ENCODE measurements at regions of chrX and their contacts with region 1.

Region 1: GRCh38 chrX:65595460-65595876 is 60.9 kb upstream of the LAS1L start:
- DNase-seq: peak; percentile 82 to 96 (median 92)
- ATAC-seq: peak; percentile 81
- H3K4me3 ChIP-seq: peak overlapping the region in 1 of 2 experiments; percentile 17
- H3K4me3 Mint-ChIP-seq: peak overlapping the region; percentile 67
- H3K27ac ChIP-seq: peak overlapping the region; percentile 64 to 90
- H3K27ac Mint-ChIP-seq: peak overlapping the region; percentile 96
- H3K4me1 ChIP-seq: peaks cover 51% of the 10 kb centered on the region
- H3K4me1 Mint-ChIP-seq: peaks cover 48% of the 10 kb centered on the region
- H3K27me3 ChIP-seq: no peaks in the 10 kb centered on the region
- H3K27me3 Mint-ChIP-seq: no peaks in the 10 kb centered on the region
- CTCF ChIP-seq: peak; percentile 82

Region 2: DNA sequence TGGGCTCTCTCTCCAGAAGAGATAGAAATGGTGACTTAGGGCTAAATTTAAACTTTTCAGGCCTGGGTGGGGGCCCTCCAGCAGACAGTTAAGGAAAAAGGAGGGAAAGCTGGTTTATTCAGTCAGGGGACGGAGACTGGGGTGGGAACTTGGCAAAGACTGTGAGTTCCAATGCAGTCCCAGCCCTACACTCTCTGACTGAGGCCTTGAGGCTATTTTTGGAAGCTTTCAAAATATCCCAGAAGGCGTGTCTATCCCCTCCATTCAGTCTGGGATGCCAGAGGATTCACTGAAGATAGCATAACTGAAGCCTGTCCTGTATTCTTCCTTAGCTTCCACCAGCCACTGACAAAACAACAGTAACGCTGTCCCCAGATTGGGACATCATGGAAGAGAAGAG is 39.9 kb after region 1 on chrX:
- CTCF ChIA-PET with region 1: no interaction called
- POLR2A ChIA-PET with region 1: no interaction called
- intact Hi-C with region 1: loop called in 1 of 2 experiments (anchors 5 kb)
- DNase-seq: no peak
- ATAC-seq: no peak
- H3K4me3 ChIP-seq: no peak overlapping the region
- H3K4me3 Mint-ChIP-seq: no peak overlapping the region
- H3K27ac ChIP-seq: no peak overlapping the region
- H3K27ac Mint-ChIP-seq: no peak overlapping the region
- H3K4me1 ChIP-seq: no peaks in the 10 kb centered on the region
- H3K4me1 Mint-ChIP-seq: peaks cover 5% of the 10 kb centered on the region
- H3K27me3 ChIP-seq: no peaks in the 10 kb centered on the region
- H3K27me3 Mint-ChIP-seq: no peaks in the 10 kb centered on the region
- CTCF ChIP-seq: no peak

Region 3: DNA sequence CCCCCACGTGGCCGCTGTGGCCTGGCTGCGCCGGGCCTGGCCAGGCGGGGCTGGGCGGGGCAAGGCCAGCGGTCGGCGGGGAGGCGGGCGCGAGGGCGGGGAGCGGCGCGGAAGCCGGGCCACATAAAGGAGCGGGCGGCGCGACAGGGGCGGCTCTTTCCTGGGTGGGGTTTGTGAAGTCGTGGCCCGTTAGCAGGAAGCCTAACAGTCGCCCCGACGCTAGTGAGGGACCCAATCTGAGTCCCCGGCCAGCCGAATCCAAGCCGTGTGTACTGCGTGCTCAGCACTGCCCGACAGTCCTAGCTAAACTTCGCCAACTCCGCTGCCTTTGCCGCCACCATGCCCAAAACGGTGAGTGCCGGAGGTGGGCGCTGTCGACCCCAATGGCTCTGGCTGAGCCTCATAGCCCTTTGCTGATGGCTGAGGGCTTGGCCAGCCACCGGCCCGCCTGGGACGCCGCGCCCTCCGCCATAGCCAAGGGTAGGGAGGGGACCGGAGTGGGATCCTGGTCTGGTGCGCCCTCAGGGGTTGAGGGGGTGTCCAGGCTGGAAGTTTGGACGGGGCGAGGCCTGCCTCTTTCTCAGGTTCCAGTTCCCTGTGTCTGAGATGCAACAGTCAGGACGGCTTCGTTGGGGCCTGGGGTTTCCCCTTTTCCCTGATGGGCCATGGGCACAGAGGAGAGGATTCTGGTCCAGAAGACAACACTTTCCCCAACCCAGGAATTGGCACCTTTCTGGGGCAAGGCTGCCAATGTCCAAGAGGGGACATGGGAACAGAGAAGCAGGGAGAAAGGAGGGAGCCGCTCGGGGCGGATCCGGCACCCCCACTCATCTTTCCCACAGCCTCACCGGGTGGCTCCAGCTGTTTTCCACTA is 72.3 kb after region 1 on chrX and contains the start of gene MSN:
- CTCF ChIA-PET with region 1: interaction called, 11 read pairs
- POLR2A ChIA-PET with region 1: interaction called, 7 read pairs
- intact Hi-C with region 1: loop called (anchors 1 to 5 kb)
- DNase-seq: peak; percentile 45 to 83 (median 75)
- ATAC-seq: peak; percentile 75
- H3K4me3 ChIP-seq: peak within 1 kb of the TSS; percentile 91 to 93
- H3K4me3 Mint-ChIP-seq: peak within 1 kb of the TSS; percentile 94
- H3K27ac ChIP-seq: peak within 1 kb of the TSS; percentile 73 to 85
- H3K27ac Mint-ChIP-seq: peak within 1 kb of the TSS; percentile 94
- H3K4me1 ChIP-seq: peaks cover 25% of the 10 kb centered on the region
- H3K4me1 Mint-ChIP-seq: peaks cover 47% of the 10 kb centered on the region
- H3K27me3 ChIP-seq: no peaks in the 10 kb centered on the region
- H3K27me3 Mint-ChIP-seq: no peaks in the 10 kb centered on the region
- CTCF ChIP-seq: no peak
- total RNA-seq, gene MSN: 285 to 286 TPM

Region 4: DNA sequence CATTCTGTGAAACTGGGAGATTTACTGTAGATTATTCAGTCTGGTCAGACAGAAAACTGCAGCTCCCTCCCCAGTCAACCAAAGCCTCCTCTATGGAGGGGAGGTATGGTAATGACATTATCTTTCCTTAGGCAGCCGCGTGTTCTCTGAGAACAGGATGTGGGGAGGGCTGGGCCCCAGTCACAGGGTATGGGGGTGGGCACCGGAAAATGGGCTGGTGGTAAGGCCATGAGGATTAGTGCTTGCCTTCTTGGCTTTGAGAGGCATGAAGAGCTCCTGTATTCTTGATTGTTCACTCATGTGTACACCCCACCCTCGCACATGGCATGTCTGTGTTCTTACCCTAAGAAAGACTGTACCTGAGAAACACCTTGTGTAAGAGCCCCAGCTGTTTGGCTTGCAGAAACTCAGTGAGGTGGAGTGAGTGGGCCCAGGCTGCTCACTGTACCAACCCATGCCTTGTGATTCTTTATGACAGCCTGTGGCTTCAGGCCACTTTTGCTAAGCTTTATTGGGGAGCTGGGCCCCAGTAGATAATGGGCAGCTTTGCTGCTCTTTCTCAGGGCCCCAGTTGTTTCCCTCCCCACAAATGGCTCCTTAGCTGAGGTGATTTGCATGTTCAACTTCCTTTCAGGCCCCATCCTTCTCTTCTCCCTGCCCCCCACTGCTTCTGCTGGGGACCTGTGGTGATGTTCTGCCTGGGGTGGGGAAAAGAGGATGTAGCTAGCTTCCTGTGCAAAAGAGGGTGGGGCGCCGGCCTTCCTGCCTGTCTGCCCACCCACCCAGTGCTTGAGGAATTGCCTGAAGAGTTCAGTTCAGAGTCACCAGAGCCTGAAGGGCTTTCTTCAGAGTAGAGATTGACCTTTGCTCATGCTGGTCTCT is 102.7 kb after region 1 on chrX:
- CTCF ChIA-PET with region 1: interaction called, 6 read pairs
- POLR2A ChIA-PET with region 1: interaction called, 4 read pairs
- intact Hi-C with region 1: loop called (anchors 1 to 5 kb)
- DNase-seq: peak; percentile 26 to 85 (median 71)
- ATAC-seq: peak; percentile 77
- H3K4me3 ChIP-seq: peak overlapping the region; percentile 5 to 23
- H3K4me3 Mint-ChIP-seq: peak overlapping the region; percentile 81
- H3K27ac ChIP-seq: peak overlapping the region; percentile 38 to 90
- H3K27ac Mint-ChIP-seq: peak overlapping the region; percentile 97
- H3K4me1 ChIP-seq: peaks cover 92% of the 10 kb centered on the region
- H3K4me1 Mint-ChIP-seq: peaks cover 87% of the 10 kb centered on the region
- H3K27me3 ChIP-seq: no peaks in the 10 kb centered on the region
- H3K27me3 Mint-ChIP-seq: no peaks in the 10 kb centered on the region
- CTCF ChIP-seq: no peak

Region 5: DNA sequence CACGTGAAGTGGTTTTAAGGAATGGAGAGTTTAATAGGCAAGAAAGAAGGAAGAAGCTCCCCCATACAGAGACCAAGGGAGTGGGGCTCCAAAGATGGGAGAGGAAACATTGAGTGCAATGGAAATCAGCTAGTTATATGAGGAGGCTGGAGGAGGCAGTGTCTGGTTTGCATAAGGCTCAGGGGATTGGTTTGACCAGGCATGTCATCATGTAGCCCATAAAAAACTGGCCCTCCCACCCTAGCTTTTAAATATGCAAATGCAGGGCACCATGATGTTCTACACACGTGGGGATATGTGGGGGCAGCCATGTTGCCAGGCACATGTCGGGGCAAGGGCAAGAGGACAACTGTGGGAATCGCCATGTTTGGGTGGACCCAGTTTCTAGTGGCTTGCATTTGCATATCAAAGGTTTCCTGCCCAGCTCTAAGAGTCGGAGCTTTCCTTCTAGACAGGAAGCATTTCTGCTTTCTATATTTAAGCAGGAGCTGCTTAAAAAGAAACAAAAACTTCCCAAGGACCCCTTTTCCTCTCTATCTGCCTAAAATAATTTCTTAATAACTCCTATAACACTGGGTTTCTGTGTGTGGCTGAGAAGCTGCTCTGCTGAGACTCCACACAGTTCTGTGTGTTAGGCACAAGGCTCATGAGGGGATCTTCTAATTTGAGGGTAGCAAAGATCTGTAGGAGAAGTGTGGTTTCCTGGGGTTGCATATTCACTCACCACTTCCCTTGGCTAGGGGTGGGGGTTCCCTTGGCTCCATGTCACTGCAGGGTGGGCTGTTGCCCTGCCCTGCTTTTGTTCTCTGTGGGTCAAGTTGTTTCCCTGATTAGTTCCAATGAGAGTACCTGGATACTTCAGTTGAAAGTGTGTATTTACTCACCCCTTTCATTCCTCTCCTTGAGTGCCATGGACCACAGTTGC is 330.9 kb after region 1 on chrX:
- CTCF ChIA-PET with region 1: interaction called, 3 read pairs
- POLR2A ChIA-PET with region 1: no interaction called
- intact Hi-C with region 1: loop called in 1 of 2 experiments (anchors 5 kb)
- DNase-seq: peak in 7 of 9 experiments; percentile 11 to 75 (median 45)
- ATAC-seq: peak; percentile 80
- H3K4me3 ChIP-seq: peak overlapping the region; percentile 24 to 35
- H3K4me3 Mint-ChIP-seq: peak overlapping the region; percentile 71
- H3K27ac ChIP-seq: peak overlapping the region; percentile 47 to 70
- H3K27ac Mint-ChIP-seq: peak overlapping the region; percentile 87
- H3K4me1 ChIP-seq: peaks cover 40% of the 10 kb centered on the region
- H3K4me1 Mint-ChIP-seq: peaks cover 53% of the 10 kb centered on the region
- H3K27me3 ChIP-seq: no peaks in the 10 kb centered on the region
- H3K27me3 Mint-ChIP-seq: no peaks in the 10 kb centered on the region
- CTCF ChIP-seq: no peak

Region 6: GRCh38 chrX:66110112-66110511 is 514.6 kb after region 1 on chrX:
- CTCF ChIA-PET with region 1: no interaction called
- POLR2A ChIA-PET with region 1: no interaction called
- intact Hi-C with region 1: loop called in 1 of 2 experiments (anchors 2 kb)
- DNase-seq: peak in 2 of 9 experiments; percentile 32 to 50
- ATAC-seq: peak; percentile 34
- H3K4me3 ChIP-seq: no peak overlapping the region
- H3K4me3 Mint-ChIP-seq: no peak overlapping the region
- H3K27ac ChIP-seq: no peak overlapping the region
- H3K27ac Mint-ChIP-seq: no peak overlapping the region
- H3K4me1 ChIP-seq: no peaks in the 10 kb centered on the region
- H3K4me1 Mint-ChIP-seq: peaks cover 2% of the 10 kb centered on the region
- H3K27me3 ChIP-seq: no peaks in the 10 kb centered on the region
- H3K27me3 Mint-ChIP-seq: no peaks in the 10 kb centered on the region
- CTCF ChIP-seq: peak; percentile 33